ENCODE measurements at regions of chr16 and their contacts with region 1.

Region 1: GRCh38 chr16:81095953-81096717 is at the start of gene GCSH:
- DNase-seq: peak; percentile 100
- total RNA-seq, gene GCSH: 22.0 to 22.5 TPM

Region 2: DNA sequence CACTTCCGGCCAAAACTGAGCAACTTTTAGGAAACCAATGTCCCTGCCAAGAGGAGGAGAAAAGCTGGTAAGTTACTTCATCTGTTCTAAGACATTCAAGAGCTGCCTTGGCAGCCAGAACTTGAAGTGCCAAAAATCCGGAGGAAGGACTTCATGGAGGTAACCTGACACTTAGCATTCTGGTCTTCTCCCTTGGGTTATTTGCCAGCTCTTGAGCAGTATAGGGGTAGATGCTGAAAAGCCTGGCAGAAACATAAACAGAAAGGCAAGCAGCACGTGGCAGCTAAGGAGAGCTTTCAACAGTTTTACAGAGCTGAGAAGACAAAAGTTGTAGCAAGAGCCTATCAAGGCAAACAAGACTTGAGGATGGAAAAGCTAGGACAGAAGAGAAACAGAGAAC is 344.9 kb before region 1 on chr16:
- intact Hi-C with region 1: no loop called
- DNase-seq: no peak

Region 3: DNA sequence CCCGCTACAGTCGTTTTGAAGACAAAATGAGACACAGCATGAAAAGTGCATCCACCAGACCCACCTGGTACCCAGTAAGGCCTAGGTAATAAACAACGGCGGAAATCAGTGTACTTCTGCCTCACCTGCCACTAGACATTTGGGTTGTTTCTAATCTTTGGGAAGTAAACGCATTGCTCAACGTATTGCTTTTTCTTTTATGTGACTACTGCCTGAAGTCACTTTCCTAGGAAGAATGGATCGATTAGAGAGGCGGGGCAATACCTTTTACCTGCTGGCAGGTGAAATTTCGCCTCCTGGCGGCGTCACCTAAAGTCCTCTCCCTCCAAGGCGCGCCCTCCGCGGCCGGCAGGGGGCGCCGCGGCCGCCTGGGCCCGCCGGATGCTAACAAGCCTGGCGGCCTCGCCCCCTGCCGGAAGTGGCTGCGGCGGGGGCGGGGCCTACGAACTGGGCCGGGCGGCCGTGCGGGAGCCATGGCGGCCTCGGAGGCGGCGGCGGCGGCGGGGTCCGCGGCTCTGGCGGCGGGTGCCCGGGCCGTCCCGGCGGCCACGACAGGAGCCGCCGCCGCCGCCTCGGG is 60.6 kb before region 1 on chr16 and contains the start of gene ATMIN:
- intact Hi-C with region 1: loop called in 1 of 2 experiments (anchors 10 kb)
- DNase-seq: peak; percentile 95
- total RNA-seq, gene ATMIN: 24.8 to 27.3 TPM

Region 4: DNA sequence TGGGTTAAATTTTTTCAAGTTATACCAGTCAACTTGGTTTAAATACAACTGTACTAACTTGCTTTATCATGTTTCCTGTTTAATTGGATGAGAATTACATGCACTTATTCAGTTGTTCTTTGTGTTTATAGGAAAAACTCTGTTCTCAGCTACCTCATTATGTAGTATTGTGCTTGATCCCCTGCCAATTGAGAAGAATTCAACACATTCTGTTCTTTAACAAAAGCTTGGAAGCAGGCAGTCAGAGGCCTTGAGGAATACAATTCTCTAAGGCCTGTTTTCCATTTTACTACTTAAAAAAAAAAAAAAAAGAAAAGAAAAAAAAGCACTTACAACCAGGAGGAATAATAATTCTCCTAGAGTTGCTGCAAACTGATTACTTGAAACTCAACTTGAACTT is 287.9 kb after region 1 on chr16:
- intact Hi-C with region 1: no loop called
- DNase-seq: no peak